ENCODE measurements at regions of chr16 and their contacts with region 1.

Region 1: DNA sequence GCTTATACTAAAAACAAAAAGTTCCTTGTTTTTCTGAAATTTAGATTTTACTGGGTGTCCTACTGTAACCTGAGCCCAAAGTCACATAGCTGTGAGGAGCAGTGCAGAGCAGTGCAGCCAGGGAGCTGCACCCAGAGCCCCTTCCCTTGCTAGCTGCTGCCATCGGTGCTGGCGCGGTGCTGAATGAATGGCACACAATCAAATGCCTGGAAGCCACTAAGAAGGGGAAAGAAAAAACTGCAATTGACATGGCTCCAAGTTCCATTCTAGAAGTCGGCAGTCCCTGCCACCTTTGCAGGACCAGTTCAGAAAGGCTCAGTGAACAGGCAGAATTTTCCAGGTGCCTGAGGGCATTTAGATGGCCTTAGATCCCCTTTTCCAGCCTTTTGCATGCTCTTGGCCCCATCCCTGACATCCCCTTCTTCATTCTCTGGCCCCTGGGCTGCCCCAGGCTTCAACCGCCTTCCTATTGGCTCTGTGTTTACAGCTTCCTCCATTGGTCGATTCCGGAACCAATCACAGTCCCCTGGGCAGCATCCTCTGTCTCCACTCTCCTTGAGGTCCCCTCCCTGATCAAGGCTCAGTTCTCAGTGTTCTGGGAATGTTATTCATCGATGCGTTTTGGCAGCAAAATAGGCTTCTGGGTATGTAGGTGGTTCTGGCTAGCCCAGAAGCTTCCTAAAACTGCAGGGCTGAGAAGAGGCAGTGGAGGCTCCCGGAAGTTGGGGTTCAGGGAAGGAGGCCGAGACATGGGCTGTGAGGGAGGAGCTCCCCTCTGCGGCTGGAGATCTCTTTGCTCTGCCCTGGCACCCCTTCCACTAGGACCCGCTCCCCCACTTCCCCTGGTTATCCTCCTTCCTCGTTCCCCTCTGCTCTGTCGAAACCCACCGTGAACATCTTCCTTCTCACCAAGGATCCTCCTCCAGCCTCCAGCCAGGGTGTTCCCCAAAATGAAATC is 37.9 kb downstream of the ATP2C2 start:
- DNase-seq: peak; percentile 35 to 94 (median 87)
- H3K4me3 ChIP-seq: peak overlapping the region; percentile 1 to 67 (median 44)
- H3K27ac ChIP-seq: peak overlapping the region; percentile 30 to 95 (median 91)
- H3K27me3 ChIP-seq: no peaks in the 10 kb centered on the region
- CTCF ChIP-seq: peak; percentile 23 to 86 (median 71)

Region 2: DNA sequence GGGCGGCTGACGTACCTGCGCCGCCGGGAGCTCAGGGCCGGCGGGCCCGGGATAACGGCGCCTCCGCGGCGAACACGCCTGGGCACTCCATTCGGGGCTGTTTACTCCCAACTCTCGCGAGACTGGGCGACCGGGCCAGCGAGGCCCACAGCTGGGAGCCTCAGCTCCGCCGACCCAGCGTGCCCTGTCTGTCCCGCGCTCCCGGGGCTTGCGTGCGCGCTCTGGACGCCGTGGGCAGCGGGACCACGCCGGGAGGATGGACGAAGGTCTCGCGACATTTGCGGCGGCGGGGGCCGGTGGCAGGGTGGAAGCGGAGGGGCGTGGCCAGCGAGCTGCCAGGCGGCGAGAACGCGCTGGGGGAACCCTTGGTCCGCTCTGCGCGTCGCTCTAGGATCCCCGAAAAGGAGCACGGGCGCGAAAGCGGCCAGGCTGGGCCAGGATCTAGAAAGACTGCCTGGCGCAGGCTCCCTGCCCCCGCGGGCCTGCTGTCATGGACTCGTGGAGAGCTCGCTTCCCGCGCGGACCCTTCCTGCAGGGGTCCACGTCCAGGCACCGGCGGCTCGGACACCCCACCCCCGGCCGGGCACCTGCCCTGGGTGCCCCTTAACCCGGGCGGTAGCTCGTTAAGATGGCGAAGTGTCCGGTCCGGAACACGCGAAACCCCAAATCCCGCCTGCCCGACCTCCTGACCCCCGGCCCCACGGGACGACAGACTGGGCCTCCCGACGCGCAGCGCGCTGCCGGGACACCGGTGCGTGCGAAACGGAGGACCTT is 289.4 kb before region 1 on chr16 and contains the start of gene MBTPS1:
- intact Hi-C with region 1: loop called in 1 of 2 experiments (anchors 5 kb)
- DNase-seq: peak; percentile 91 to 99 (median 97)
- H3K4me3 ChIP-seq: peak within 1 kb of the TSS; percentile 56 to 100 (median 95)
- H3K27ac ChIP-seq: peak within 1 kb of the TSS; percentile 30 to 98 (median 92)
- H3K27me3 ChIP-seq: no peaks in the 10 kb centered on the region
- CTCF ChIP-seq: peak in 39 of 56 donors; percentile 2 to 80 (median 34)
- total RNA-seq, gene MBTPS1: 70.0 to 125 (median 95.6) TPM

Region 3: DNA sequence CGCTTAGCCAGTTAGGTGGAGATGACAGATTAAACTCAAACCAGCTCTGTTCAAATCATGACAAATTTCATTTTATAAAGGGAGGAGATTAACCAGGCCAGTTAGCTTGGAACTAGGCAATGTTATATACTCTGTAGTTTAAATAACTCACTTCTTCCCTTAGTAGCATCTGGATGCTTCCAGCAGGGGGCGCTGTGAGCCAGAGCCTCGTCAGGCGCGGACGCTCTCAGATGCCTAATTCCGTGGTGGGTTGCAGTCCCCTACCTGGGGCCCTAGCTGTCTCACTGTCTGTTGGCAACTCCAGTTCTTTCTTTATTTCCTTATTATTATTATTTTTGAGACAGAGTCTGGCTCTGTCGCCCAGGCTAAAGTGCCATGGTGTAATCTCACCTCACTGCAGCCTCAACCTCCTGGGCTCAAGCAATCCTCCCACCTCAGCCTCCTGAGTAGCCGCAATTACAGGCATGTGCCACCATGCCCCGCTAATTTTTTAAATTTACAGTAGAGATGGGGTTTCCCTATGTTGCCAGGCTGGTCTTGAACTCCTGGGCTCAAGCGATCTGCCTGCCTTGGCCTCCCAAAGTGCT is 129.0 kb before region 1 on chr16:
- intact Hi-C with region 1: loop called (anchors 1 kb)
- DNase-seq: peak; percentile 42 to 77 (median 74)
- H3K4me3 ChIP-seq: no peak overlapping the region
- H3K27ac ChIP-seq: peak overlapping the region in 1 of 59 donors; percentile 31
- H3K27me3 ChIP-seq: peaks cover 0 to 4% (median 0%) of the 10 kb centered on the region in 45 donors
- CTCF ChIP-seq: peak; percentile 82 to 99 (median 95)

Region 4: GRCh38 chr16:84357191-84357651 is 49.1 kb before region 1 on chr16:
- intact Hi-C with region 1: loop called (anchors 2 kb)
- DNase-seq: peak in 1 of 10 donors; percentile 31
- H3K4me3 ChIP-seq: peak overlapping the region in 1 of 59 donors; percentile 3
- H3K27ac ChIP-seq: peak overlapping the region in 58 of 59 donors; percentile 40 to 93 (median 87)
- H3K27me3 ChIP-seq: no peaks in the 10 kb centered on the region
- CTCF ChIP-seq: no peak

Region 5: DNA sequence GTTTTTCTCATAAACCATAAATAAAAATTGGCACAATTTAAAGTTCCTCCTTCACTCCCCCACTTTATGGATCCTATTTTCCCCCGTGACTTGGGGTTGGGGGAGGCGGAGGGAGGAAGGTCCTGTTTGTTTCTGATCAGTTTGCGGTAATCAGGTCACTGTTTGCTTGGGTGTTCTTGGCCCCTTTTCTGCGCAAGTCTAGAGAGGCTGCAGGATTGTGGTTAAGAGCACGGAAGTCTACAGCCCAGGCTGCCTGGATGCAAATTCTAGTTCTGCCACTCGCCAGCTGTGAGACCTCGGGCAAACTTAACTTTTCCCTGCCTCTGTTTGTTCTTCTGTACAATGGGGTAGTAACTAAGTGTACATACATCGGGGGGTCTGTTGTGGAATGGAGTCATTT is 25.9 kb before region 1 on chr16:
- intact Hi-C with region 1: loop called in 1 of 2 experiments (anchors 1 kb)
- DNase-seq: peak in 1 of 10 donors; percentile 7
- H3K4me3 ChIP-seq: no peak overlapping the region
- H3K27ac ChIP-seq: no peak overlapping the region
- H3K27me3 ChIP-seq: no peaks in the 10 kb centered on the region
- CTCF ChIP-seq: no peak

Region 6: GRCh38 chr16:84464967-84465553 is 58.8 kb after region 1 on chr16:
- intact Hi-C with region 1: no loop called
- DNase-seq: peak in 2 of 10 donors; percentile 2 to 24
- H3K4me3 ChIP-seq: no peak overlapping the region
- H3K27ac ChIP-seq: no peak overlapping the region
- H3K27me3 ChIP-seq: no peaks in the 10 kb centered on the region
- CTCF ChIP-seq: no peak

Region 7: GRCh38 chr16:84484579-84485254 is 78.4 kb after region 1 on chr16:
- intact Hi-C with region 1: loop called in 1 of 2 experiments (anchors 5 kb)
- DNase-seq: peak; percentile 68 to 89 (median 78)
- H3K4me3 ChIP-seq: peak overlapping the region in 1 of 59 donors; percentile 32
- H3K27ac ChIP-seq: peak overlapping the region in 23 of 59 donors; percentile 5 to 72 (median 52)
- H3K27me3 ChIP-seq: no peaks in the 10 kb centered on the region
- CTCF ChIP-seq: peak; percentile 64 to 96 (median 88)

Measured in dorsolateral prefrontal cortex (tissue), 120 donors.